GM10248 (cell line): ENCODE measurements at regions of chr2 and their contacts with region 1.

Region 1: DNA sequence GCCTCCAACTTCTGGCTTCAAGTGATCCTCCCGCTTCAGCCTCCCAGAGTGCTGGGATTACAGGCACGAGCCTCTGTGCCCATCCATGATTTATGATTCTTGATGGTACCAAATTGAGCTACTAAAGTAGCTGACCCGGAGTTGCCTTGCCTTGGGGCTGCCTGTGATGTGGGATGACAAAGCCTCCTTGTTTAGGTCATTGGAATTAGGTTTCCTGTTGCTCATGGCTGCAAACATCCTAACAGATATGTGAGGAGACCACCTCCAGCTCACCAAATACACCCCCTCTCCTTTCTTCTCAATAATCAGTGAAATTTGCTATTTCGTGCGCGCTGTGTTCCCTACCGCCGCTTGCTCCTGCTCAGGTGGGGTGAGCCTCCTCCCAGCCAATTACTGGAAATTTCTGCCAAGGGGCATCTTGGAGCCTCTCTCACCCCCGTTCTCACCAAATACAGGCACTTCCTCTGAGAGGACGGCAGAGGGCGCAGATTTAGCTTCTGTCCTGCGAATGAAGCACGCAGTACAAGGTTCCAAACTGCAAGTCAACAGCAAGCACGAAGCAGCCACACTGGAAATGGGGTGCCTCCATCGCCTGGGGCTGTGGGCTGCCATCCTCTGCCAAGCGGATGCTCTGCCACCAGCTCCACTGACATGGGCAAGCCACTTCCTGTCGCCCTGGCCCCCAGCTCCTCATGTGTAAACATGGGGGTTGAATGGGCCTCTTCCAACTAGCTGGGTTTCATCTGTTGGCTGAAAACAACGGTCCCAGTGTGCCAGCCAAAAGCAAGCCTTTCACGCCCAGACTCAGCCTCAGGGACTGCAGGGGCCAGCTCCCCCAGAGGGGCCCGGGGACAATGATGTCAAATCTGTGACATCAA is 71.7 kb downstream of the NCAPH start:
- DNase-seq: peak; percentile 85
- CTCF ChIP-seq: peak; percentile 86

Region 2: DNA sequence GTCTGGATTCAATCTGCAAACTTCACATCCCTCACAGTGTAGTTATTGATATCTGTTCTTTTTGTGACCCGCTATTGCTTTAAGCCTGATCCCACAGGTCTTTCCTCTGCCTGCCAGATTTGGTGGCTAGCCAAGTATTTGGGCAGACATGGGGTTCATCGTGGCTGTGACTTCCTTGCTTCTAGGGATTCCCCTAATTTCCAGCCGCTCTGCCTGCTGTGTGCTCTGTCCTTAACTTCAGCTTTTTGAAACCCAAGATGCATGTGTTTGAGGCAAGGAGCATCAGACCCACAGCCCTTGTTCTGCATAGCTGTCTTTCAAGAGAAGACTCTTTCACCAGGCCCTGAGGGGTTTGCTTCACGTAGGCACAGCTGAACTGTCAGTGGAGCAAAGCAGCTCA is 17.5 kb before region 1 on chr2:
- CTCF ChIA-PET with region 1: interaction called, 25 read pairs
- POLR2A ChIA-PET with region 1: no interaction called
- DNase-seq: no peak
- CTCF ChIP-seq: no peak

Region 3: DNA sequence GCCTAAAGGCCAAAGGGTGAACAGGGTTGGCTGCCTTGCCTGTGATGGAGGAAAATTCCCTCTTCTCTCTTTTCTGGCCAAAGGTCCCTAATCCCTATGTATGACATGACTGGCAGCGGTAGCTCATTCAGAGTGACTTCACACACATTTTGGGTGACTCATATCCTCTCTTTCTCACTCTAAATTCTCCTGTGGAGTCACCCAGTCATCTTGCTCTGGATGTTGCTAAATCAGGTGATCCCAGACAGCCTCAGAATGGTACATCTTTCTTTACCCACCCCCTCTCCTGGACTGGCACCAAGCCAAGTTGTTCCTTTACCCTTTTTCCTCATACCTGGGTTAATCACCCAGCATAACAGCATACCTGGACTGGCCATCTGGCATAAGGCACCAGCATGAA is 20.6 kb after region 1 on chr2:
- CTCF ChIA-PET with region 1: interaction called, 26 read pairs
- POLR2A ChIA-PET with region 1: no interaction called
- DNase-seq: no peak
- CTCF ChIP-seq: no peak

Region 4: GRCh38 chr2:96449637-96450036 is 42.4 kb after region 1 on chr2:
- CTCF ChIA-PET with region 1: interaction called, 12 read pairs
- POLR2A ChIA-PET with region 1: no interaction called
- DNase-seq: no peak
- CTCF ChIP-seq: no peak

Region 5: DNA sequence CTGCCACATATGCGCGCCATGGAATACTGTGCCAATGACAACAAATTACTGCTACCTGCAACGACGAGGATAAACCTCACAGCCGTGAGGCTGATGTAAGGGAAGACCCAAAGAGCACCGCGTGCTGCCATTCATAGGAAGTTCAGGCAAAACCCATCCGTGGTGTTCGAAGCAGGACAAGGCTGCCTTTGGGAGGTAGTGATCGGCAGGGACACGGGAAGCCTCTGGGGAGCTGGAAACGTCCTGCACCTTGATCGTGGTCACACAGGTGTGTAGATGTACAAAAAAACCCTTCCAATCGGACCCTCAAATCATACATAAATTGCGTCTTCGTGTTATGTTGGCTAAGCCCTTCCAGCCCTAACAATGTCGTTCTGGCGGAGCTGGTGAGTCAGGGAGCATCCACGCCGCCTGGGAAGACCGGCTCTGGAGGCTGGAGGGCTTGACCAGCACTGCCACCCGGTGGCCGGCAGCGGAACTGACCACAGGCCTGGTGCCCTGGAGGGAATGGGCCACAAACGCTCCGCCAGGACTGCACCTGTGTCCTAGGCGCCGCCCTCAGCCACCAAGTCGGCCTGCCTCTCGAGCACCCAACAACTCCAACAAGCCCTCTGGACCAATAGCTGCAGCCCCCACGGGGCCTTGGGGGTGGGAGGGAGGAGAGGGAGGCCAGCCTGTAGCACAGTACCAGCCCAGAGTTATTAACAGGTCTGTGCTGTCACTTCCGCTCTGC is 102.0 kb after region 1 on chr2:
- CTCF ChIA-PET with region 1: interaction called, 269 read pairs
- POLR2A ChIA-PET with region 1: no interaction called
- DNase-seq: peak; percentile 86
- CTCF ChIP-seq: peak; percentile 98

Region 6: GRCh38 chr2:96554293-96555145 is 147.2 kb after region 1 on chr2:
- CTCF ChIA-PET with region 1: interaction called, 21 read pairs
- POLR2A ChIA-PET with region 1: no interaction called
- DNase-seq: peak; percentile 87
- CTCF ChIP-seq: peak; percentile 87